Ascending aorta (tissue), 2 donors: ENCODE measurements at regions of chr6 and their contacts with region 1.

Region 1: GRCh38 chr6:34154668-34155447 is 9.0 kb upstream of the GRM4 start:
- DNase-seq: peak in 1 of 2 donors; percentile 65
- H3K4me3 ChIP-seq: peak overlapping the region in 1 of 2 donors; percentile 24
- H3K27ac ChIP-seq: no peak overlapping the region
- H3K4me1 ChIP-seq: peaks cover 0 to 2% of the 10 kb centered on the region in 2 donors
- H3K27me3 ChIP-seq: peaks cover 14% of the 10 kb centered on the region
- CTCF ChIP-seq: peak; percentile 88 to 99 (median 93)

Region 2: DNA sequence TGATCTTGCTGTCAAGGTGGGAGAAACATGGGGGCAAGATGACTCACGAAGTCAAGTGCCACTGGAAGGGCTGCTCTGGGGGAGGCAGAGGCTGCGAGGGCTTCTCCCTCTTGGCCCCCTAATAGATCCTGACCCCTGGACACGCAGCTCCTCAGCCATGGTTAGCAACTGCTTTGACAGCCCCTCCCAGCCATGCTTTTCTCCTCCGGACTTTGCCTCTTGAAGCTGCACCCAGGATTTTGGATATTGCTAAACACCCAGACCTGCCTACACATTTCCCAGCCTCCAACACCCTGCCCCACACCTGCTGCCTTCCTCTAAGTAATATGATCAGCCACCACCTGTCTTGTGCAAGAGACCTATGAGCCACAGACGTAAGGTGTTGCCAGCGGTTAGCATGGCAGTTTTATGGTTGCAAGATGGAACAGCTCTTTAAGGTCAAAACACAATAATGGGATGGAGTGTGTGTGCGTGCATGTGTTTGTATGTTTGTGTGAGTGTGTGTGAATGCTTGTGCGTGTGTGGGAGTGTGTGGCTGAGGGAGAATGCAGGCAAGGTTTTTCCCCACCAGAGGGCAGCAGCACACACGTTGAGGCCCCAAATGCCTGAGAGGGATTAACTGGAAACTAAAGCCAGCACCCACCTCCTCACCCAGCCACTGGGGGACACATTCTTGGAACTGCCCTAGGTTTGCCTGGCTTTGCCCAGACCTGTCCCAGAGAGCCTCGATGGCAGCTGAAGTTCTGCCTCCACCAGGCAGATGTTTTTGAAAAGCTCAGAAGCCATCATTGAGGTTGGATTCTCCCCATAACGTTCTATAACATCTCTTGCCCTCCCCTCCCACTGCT is 410.6 kb before region 1 on chr6:
- intact Hi-C with region 1: loop called (anchors 2 kb)
- DNase-seq: peak in 1 of 2 donors; percentile 79
- H3K4me3 ChIP-seq: no peak overlapping the region
- H3K27ac ChIP-seq: no peak overlapping the region
- H3K4me1 ChIP-seq: no peaks in the 10 kb centered on the region
- H3K27me3 ChIP-seq: no peaks in the 10 kb centered on the region
- CTCF ChIP-seq: peak; percentile 66 to 83 (median 83)

Region 3: DNA sequence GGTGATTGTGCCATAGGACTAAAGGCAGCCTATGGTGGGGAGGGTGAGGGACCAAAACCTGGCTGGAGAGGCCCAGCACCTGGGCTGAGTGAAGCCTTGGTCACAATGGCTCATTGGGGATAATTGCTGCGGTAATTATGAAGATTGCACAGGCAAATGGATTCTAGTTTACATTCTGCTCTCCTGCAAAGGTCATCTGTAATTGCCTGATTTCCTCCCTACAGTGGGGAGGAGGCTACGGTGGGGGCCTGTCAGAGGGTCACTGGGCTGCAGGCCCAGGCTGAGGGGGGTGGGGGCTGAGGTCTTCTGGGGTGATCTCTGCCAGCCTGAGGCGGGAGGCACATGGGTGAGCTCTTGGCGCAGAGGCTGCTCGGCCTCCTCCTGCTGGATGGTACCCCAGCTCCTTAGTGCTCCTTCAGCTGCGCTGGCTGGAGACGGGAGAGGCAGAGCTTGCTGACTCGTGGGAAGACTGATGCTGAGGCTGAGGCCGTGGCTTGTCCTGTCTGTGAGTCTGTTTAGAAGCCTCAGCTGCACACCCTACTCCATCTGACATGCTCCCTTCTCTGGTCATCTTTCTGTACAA is 341.3 kb after region 1 on chr6:
- intact Hi-C with region 1: no loop called
- DNase-seq: no peak
- H3K4me3 ChIP-seq: no peak overlapping the region
- H3K27ac ChIP-seq: no peak overlapping the region
- H3K4me1 ChIP-seq: no peaks in the 10 kb centered on the region
- H3K27me3 ChIP-seq: no peaks in the 10 kb centered on the region
- CTCF ChIP-seq: no peak